ENCODE measurements at regions of chr13 and their contacts with region 1.

Region 1: DNA sequence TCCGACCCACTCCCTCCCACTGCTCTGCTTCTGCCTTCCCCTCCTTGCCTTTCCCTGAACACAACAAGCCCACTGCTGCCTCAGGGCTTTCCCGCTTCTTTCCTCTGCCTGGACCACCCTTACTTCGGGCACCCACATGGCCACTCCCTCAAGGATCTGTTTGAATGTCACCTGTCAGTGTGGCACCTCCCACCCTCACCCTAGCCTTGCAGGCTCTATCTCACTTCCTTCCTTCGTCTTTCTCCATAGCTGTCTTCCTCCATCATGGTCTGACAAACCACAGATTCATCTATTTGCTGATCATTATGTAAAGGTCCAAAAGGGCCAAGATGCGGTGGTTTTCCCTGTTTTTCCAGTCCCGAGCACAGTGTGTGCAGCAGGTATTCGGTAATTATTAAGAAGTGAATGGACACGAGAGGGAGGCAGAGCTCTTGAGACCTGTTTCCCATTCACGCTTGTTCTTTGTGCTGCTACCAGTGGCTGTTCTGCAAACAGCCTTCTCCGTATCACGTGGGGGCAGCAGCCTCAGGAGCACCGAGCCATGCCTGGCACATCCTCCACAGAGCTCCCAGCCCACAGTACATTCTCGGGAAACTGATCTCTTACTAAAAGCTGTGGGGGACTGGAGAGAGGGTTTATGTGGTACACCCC is 50.2 kb downstream of the CCDC70 start:
- DNase-seq: no peak
- ATAC-seq: no peak
- H3K4me3 ChIP-seq: no peak overlapping the region
- H3K27ac ChIP-seq: no peak overlapping the region
- H3K4me1 ChIP-seq: no peaks in the 10 kb centered on the region
- H3K27me3 ChIP-seq: no peaks in the 10 kb centered on the region
- CTCF ChIP-seq: no peak

Region 2: DNA sequence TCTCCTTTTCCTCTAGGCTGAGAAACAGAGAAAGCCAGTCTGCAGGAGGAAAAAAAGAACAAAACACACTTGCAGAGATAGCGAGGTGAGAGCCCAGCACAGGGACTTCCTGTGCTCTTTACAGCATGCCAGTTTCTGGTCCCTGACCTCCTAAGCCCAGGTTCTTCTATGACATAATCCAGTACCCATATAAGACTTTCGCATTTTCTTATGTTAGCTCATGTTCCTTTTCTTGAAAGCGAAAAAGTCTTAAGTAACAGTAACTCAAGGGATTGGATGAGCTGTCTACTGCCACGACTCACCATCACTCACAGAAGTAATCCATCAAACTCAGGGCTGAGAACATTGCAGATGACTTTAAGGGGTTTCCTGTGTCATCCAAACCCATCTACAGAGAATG is 32.9 kb before region 1 on chr13:
- intact Hi-C with region 1: loop called in 1 of 2 experiments (anchors 1 kb)
- DNase-seq: no peak
- ATAC-seq: no peak
- H3K4me3 ChIP-seq: no peak overlapping the region
- H3K27ac ChIP-seq: no peak overlapping the region
- H3K4me1 ChIP-seq: no peaks in the 10 kb centered on the region
- H3K27me3 ChIP-seq: no peaks in the 10 kb centered on the region
- CTCF ChIP-seq: no peak

Region 3: GRCh38 chr13:51935326-51936201 is 23.6 kb after region 1 on chr13:
- intact Hi-C with region 1: no loop called
- DNase-seq: no peak
- ATAC-seq: peak; percentile 47 to 67 (median 58)
- H3K4me3 ChIP-seq: no peak overlapping the region
- H3K27ac ChIP-seq: no peak overlapping the region
- H3K4me1 ChIP-seq: no peaks in the 10 kb centered on the region
- H3K27me3 ChIP-seq: no peaks in the 10 kb centered on the region
- CTCF ChIP-seq: peak; percentile 16